H1 (cell line): ENCODE measurements at regions of chr7 and their contacts with region 1.

Region 1: DNA sequence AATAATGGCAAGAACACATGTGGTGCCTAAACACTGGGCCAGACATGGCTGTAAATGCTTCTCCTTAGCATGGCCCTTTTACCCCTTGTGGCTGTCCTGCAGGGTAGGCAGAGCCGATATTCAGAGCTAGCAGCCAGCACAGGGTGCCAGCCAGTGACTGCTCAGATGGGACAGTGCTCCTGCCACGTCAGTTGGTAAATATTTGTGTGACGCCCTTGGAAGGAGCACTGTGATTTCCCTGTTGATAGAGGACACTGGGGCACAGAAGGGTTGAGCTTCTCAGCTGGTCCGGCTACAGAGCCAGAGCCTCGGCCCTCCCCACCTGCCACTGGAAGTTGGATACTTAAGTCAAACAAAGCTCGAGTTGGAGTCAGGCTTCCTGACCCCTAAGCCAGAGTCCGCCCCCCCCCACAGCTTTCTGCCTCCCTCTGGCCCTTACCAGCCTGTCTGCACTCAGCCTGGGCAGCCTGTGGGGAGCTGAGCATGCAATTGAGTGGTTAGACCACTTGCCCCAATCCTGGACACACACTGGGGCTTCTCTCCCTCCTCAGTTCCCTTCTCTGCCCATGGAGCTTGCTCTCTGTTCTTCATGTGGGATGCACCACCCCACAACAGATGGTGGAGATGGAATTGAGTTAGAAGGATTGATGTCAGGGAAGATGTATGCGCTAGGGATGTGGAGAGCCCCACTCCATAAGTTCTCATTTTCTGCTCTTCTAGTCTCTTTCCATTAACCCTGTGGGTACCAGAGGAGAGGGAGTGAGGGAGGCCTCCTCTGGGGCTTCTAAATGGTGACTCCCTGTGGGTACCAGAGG is 350.8 kb downstream of the PLXNA4 start:
- DNase-seq: no peak
- H3K4me3 ChIP-seq: no peak overlapping the region
- H3K27ac ChIP-seq: no peak overlapping the region
- H3K4me1 ChIP-seq: peaks cover 0 to 3% (median 0%) of the 10 kb centered on the region in 4 experiments; a peak in 1 of 7 replicates
- H3K27me3 ChIP-seq: no peaks in the 10 kb centered on the region; a peak in 1 of 7 replicates
- CTCF ChIP-seq: no peak
- EP300 ChIP-seq: no peak
- POLR2A ChIP-seq: no peak
- RAD21 ChIP-seq: no peak

Region 2: DNA sequence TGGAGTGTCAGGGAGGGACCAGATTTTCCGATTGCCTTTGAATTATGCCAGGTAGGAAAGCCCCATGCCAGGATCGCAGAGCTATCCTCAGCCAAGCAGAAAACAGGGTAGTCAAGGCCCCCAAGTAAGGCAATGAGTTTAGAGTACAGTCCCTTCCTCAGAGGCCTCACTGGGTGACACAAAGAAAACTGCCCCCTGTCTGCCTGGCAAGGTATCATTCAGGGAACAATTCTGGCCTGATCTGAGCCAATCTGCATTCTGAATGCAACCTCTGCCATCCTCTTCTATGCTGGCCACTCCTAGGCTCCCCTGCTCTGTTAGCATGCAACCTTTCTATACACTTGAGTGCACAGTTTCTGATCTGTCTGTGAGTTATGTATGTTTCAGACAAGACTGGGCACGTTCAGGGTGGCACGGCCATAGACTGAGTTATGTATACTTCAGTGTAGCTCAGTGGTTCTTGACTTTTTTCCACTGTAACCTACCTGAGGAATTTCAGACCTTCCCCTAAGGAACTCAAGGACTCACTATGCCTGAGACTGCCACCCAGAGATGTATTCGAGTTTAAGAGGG is 14.1 kb after region 1 on chr7:
- CTCF ChIA-PET with region 1: interaction called, 14 read pairs
- POLR2A ChIA-PET with region 1: no interaction called
- DNase-seq: no peak
- H3K4me3 ChIP-seq: no peak overlapping the region
- H3K27ac ChIP-seq: no peak overlapping the region
- H3K4me1 ChIP-seq: peaks cover 0 to 3% (median 1%) of the 10 kb centered on the region in 4 experiments; a peak in 3 of 7 replicates
- H3K27me3 ChIP-seq: no peaks in the 10 kb centered on the region
- CTCF ChIP-seq: peak; percentile 22 to 64 (median 33); a peak in 3 of 4 replicates
- EP300 ChIP-seq: no peak
- POLR2A ChIP-seq: no peak
- RAD21 ChIP-seq: peak; percentile 33 to 54; a peak in 3 of 4 replicates